Calu3 (cell line): ENCODE measurements at regions of chr5 and their contacts with region 1.

Region 1: DNA sequence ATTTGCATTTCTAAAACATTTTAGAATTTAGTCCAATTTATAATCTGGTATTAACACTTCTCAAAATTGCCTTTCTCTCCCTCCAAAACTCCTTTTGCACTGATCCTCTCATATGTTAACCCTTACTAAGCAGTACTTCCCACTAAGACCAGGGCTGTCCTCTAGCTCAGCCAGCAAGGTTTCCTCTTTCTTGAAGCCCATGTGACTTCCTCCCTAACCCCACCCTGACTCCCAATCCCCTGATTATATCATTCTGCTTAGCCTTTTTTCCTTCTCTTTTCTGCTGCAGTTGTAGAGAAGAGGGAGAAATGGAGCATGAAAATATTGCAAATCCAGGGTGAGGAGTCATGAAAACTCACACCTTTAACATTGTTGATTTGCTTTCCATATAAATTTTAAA is 241.7 kb downstream of the MCTP1 start:
- DNase-seq: no peak
- H3K4me3 Mint-ChIP-seq: no peak overlapping the region
- H3K27ac Mint-ChIP-seq: no peak overlapping the region
- H3K4me1 Mint-ChIP-seq: no peaks in the 10 kb centered on the region
- H3K27me3 Mint-ChIP-seq: no peaks in the 10 kb centered on the region
- CTCF ChIP-seq: no peak

Region 2: DNA sequence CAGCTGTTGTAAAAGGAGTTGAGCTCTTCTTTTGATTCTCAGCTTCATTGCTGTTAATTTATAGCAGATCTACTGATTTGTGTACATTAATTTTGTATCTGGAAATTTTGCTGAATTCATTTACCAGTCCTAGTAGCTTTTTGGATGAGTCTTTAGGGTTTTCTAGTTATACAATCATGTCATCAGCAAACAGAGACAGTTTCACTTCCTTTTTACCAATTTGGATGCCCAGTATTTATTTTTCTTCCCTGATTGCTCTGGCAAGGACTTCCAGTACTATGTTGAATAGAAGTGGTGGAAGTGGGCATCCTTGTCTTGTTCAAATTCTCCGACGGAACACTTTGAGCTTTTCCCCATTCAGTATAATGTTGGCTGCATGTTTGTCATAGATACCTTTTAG is 902.9 kb before region 1 on chr5:
- CTCF ChIA-PET with region 1: no interaction called
- intact Hi-C with region 1: no loop called
- DNase-seq: no peak
- H3K4me3 Mint-ChIP-seq: no peak overlapping the region
- H3K27ac Mint-ChIP-seq: no peak overlapping the region
- H3K4me1 Mint-ChIP-seq: no peaks in the 10 kb centered on the region
- H3K27me3 Mint-ChIP-seq: no peaks in the 10 kb centered on the region
- CTCF ChIP-seq: no peak

Region 3: GRCh38 chr5:94274707-94275106 is 768.5 kb before region 1 on chr5:
- CTCF ChIA-PET with region 1: interaction called, 20 read pairs
- intact Hi-C with region 1: no loop called
- DNase-seq: no peak
- H3K4me3 Mint-ChIP-seq: no peak overlapping the region
- H3K27ac Mint-ChIP-seq: no peak overlapping the region
- H3K4me1 Mint-ChIP-seq: no peaks in the 10 kb centered on the region
- H3K27me3 Mint-ChIP-seq: no peaks in the 10 kb centered on the region
- CTCF ChIP-seq: no peak

Region 4: GRCh38 chr5:94776167-94776566 is 267.1 kb before region 1 on chr5:
- CTCF ChIA-PET with region 1: no interaction called
- intact Hi-C with region 1: no loop called
- DNase-seq: no peak
- H3K4me3 Mint-ChIP-seq: no peak overlapping the region
- H3K27ac Mint-ChIP-seq: no peak overlapping the region
- H3K4me1 Mint-ChIP-seq: no peaks in the 10 kb centered on the region
- H3K27me3 Mint-ChIP-seq: no peaks in the 10 kb centered on the region
- CTCF ChIP-seq: no peak

Region 5: GRCh38 chr5:96031811-96032261 is 988.6 kb after region 1 on chr5:
- CTCF ChIA-PET with region 1: no interaction called
- intact Hi-C with region 1: no loop called
- DNase-seq: no peak
- H3K4me3 Mint-ChIP-seq: no peak overlapping the region
- H3K27ac Mint-ChIP-seq: no peak overlapping the region
- H3K4me1 Mint-ChIP-seq: peaks cover 21% of the 10 kb centered on the region
- H3K27me3 Mint-ChIP-seq: no peaks in the 10 kb centered on the region
- CTCF ChIP-seq: no peak